PC-3 (cell line): ENCODE measurements at regions of chr2 and their contacts with region 1.

Region 1: GRCh38 chr2:127986548-127987079 is 41.2 kb downstream of the SAP130 start:
- DNase-seq: no peak
- ATAC-seq: no peak
- H3K4me3 ChIP-seq: no peak overlapping the region
- H3K27ac ChIP-seq: no peak overlapping the region
- H3K4me1 ChIP-seq: no peaks in the 10 kb centered on the region
- H3K27me3 ChIP-seq: no peaks in the 10 kb centered on the region
- CTCF ChIP-seq: no peak

Region 2: GRCh38 chr2:127874378-127875271 is 112.0 kb before region 1 on chr2:
- CTCF ChIA-PET with region 1: no interaction called
- POLR2A ChIA-PET with region 1: no interaction called
- intact Hi-C with region 1: no loop called
- DNase-seq: no peak
- ATAC-seq: no peak
- H3K4me3 ChIP-seq: no peak overlapping the region
- H3K27ac ChIP-seq: no peak overlapping the region
- H3K4me1 ChIP-seq: no peaks in the 10 kb centered on the region
- H3K27me3 ChIP-seq: no peaks in the 10 kb centered on the region
- CTCF ChIP-seq: no peak

Region 3: DNA sequence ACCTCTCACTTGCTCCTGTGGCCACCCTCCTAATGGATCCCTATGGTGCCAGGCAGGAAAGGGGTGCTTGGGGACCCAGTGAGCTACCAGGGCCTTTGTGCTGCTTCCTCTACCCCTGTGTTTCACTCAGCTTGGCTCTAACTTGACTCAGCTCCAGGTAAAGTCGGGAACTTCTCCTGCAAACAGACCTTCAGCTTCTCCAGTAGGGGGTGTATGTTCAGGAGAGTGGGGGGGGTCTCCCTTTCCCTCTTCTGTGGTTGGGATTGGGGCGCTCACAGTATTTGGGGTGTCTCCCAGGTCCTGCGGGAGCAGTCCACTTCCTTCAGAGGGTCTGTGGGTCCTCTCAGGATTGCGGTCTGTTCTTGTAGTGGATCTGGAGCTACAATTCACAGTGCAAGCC is 67.5 kb after region 1 on chr2:
- CTCF ChIA-PET with region 1: interaction called, 14 read pairs
- POLR2A ChIA-PET with region 1: no interaction called
- intact Hi-C with region 1: no loop called
- DNase-seq: no peak
- ATAC-seq: no peak
- H3K4me3 ChIP-seq: no peak overlapping the region
- H3K27ac ChIP-seq: no peak overlapping the region
- H3K4me1 ChIP-seq: no peaks in the 10 kb centered on the region
- H3K27me3 ChIP-seq: no peaks in the 10 kb centered on the region
- CTCF ChIP-seq: no peak